HAP-1 (cell line): ENCODE measurements at regions of chr15 and their contacts with region 1.

Region 1: GRCh38 chr15:71443538-71443937 is 328.3 kb downstream of the THSD4 start:
- DNase-seq: peak; percentile 91 to 96
- H3K4me3 ChIP-seq: no peak overlapping the region
- H3K4me1 ChIP-seq: peaks cover 21% of the 10 kb centered on the region
- H3K27me3 ChIP-seq: no peaks in the 10 kb centered on the region

Region 2: GRCh38 chr15:70815644-70816043 is 627.9 kb before region 1 on chr15:
- in situ Hi-C with region 1: no loop called
- DNase-seq: no peak
- H3K4me3 ChIP-seq: no peak overlapping the region
- H3K4me1 ChIP-seq: 0 out of 2 replicates have a peak, but pooled peaks cover 2% of the 10 kb centered on the region
- H3K27me3 ChIP-seq: no peaks in the 10 kb centered on the region

Region 3: DNA sequence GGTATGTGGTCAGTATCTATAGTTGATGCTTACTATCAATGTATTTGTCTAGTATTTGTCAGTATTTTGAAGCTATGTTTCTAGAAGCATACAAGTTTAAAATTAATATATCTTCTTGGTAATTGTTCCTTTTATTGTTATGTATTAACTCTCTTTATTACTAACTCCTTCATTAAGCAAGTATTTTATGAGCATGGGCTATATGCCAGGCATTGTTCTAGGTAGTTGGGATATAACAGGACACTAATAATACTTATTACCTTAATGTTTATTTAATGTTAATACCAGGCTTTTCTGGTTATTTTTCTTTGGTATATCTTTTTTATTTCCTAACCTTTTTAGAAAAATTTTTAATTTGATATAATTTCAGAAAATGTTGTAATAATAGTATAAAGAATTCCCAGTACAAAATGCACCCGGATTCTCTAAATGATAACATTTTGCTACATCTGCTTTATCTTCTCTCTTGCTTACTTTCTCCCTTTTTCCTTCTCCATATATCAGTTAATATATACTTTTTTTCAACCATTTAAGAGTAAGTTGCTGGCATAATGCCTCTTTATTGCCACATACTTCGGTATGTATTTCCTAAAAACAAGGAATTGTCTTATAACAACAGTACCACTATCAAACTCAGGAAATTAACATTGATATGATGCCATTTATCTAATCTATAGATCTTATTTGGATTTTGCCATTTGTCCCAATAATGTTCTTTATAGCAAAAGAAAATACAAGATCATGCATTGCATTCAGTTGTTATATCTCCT is 520.0 kb before region 1 on chr15:
- in situ Hi-C with region 1: no loop called
- DNase-seq: no peak
- H3K4me3 ChIP-seq: no peak overlapping the region
- H3K4me1 ChIP-seq: peaks cover 3% of the 10 kb centered on the region; the same call in 1 of the 2 replicates
- H3K27me3 ChIP-seq: no peaks in the 10 kb centered on the region

Region 4: DNA sequence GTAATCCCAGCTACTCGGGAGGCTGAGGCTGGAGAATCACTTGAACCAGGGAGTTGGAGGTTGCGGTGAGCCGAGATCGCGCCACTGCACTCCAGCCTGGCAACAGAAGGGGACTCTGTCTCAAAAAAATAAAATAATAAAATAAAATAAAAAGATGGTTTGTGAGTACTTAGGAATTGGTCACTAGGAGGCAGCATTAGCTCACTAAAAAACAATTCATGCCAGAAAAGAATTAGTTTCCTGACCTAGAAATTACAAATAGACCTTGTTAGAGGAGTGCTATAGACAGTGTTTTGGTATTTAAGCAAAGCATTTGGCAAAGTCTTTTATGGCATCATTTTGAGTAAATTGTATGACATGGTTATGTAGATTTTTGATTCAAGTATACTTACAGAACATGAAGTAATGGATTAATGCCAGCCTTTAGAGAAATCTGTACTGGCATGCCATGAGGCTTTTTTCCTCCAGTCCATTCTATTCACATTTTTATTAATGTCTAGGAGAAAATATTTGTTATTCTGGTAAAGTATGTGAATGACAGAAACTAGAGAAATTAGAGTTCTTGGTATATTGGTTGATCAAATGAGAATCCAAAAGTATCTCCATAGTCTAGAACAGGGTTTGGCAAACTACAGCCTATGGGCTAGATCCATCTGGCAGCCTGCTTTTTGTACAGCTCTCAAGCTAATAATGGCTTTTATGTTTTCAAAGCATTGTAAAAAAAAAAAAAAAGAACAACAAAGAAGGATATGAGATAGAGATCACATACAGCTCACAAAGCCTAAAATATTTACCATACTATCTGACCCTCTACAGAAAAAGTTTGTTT is 469.3 kb before region 1 on chr15:
- in situ Hi-C with region 1: loop called (anchors 5 kb)
- DNase-seq: peak in 1 of 2 experiments; percentile 55
- H3K4me3 ChIP-seq: no peak overlapping the region
- H3K4me1 ChIP-seq: no peaks in the 10 kb centered on the region; the same call in 1 of the 2 replicates
- H3K27me3 ChIP-seq: no peaks in the 10 kb centered on the region; the same call in 1 of the 2 replicates

Region 5: GRCh38 chr15:71114896-71115554 is 328.5 kb before region 1 on chr15 and contains the start of gene THSD4:
- in situ Hi-C with region 1: loop called (anchors 5 kb)
- DNase-seq: peak; percentile 94
- H3K4me3 ChIP-seq: peak within 1 kb of the TSS; percentile 57
- H3K4me1 ChIP-seq: 0 out of 2 replicates have a peak, but pooled peaks cover 5% of the 10 kb centered on the region
- H3K27me3 ChIP-seq: no peaks in the 10 kb centered on the region